ENCODE measurements at regions of chr4 and their contacts with region 1.

Region 1: GRCh38 chr4:67928575-67928974 is 34.7 kb downstream of the TMPRSS11A start:
- DNase-seq: no peak
- H3K4me3 ChIP-seq: no peak overlapping the region
- H3K27ac ChIP-seq: no peak overlapping the region
- H3K27me3 ChIP-seq: no peaks in the 10 kb centered on the region
- CTCF ChIP-seq: no peak

Region 2: GRCh38 chr4:67879486-67879885 is 49.1 kb before region 1 on chr4:
- CTCF ChIA-PET with region 1: no interaction called
- POLR2A ChIA-PET with region 1: interaction called, 10 read pairs
- DNase-seq: no peak
- H3K4me3 ChIP-seq: no peak overlapping the region
- H3K27ac ChIP-seq: no peak overlapping the region
- H3K27me3 ChIP-seq: no peaks in the 10 kb centered on the region
- CTCF ChIP-seq: no peak